Heart right ventricle (tissue), 16 donors: ENCODE measurements at regions of chr18 and their contacts with region 1.

Region 1: GRCh38 chr18:22551536-22552151 is 133.9 kb upstream of the CTAGE1 start:
- DNase-seq: no peak
- ATAC-seq: peak in 2 of 8 donors; percentile 36 to 48
- H3K4me3 ChIP-seq: no peak overlapping the region
- H3K27ac ChIP-seq: peak overlapping the region in 6 of 10 donors; percentile 2 to 60 (median 16)
- H3K4me1 ChIP-seq: peaks cover 6 to 35% (median 14%) of the 10 kb centered on the region in 9 donors
- H3K27me3 ChIP-seq: no peaks in the 10 kb centered on the region
- CTCF ChIP-seq: no peak

Region 2: DNA sequence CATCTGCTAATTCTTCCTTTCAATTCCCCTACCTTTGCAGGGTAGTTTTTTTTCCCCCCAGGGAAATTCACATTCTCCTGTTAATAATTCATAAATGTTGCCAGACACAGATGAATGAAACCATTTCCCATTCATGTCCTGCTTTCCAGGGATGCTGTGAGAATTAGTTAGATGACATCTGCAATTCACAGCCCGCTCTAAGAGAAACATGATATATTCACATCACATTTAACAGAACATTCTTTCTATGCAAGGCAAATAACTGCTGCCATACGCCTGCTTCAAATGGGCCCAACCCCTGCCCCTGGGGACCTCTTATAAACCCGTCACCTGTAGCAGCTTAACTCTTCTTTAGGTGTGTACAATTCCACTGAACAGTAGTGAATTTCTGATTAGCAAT is 23.4 kb before region 1 on chr18:
- intact Hi-C with region 1: loop called in 1 of 10 experiments (anchors 2 kb)
- DNase-seq: no peak
- ATAC-seq: no peak
- H3K4me3 ChIP-seq: no peak overlapping the region
- H3K27ac ChIP-seq: no peak overlapping the region
- H3K4me1 ChIP-seq: peaks cover 0 to 17% (median 0%) of the 10 kb centered on the region in 9 donors
- H3K27me3 ChIP-seq: no peaks in the 10 kb centered on the region
- CTCF ChIP-seq: no peak